CD14-positive monocyte (primary cell): ENCODE measurements at regions of chr1 and their contacts with region 1.

Region 1: GRCh38 chr1:17119076-17119772 is at the start of gene PADI2:
- DNase-seq: peak; percentile 65 to 71 (median 67)
- H3K4me3 ChIP-seq: peak within 1 kb of the TSS; percentile 60 to 75 (median 69)
- H3K4me3 Mint-ChIP-seq: peak within 1 kb of the TSS; percentile 83 to 97
- H3K27ac ChIP-seq: peak within 1 kb of the TSS; percentile 60 to 76
- H3K27ac Mint-ChIP-seq: peak within 1 kb of the TSS; percentile 63 to 94 (median 88)
- H3K4me1 ChIP-seq: peaks cover 91 to 92% of the 10 kb centered on the region in 2 donors
- H3K4me1 Mint-ChIP-seq: peaks cover 86% of the 10 kb centered on the region
- H3K27me3 ChIP-seq: no peaks in the 10 kb centered on the region
- H3K27me3 Mint-ChIP-seq: peaks cover 2 to 8% (median 8%) of the 10 kb centered on the region in 3 donors
- CTCF ChIP-seq: no peak
- polyA plus RNA-seq, gene PADI2: 18.6 to 61.7 (median 32.6) TPM

Region 2: GRCh38 chr1:17066361-17067068 is 52.7 kb before region 1 on chr1:
- intact Hi-C with region 1: loop called in 1 of 2 experiments (anchors 2 kb)
- DNase-seq: peak; percentile 72 to 81 (median 75)
- H3K4me3 ChIP-seq: peak overlapping the region in 1 of 3 experiments; percentile 6
- H3K4me3 Mint-ChIP-seq: peak overlapping the region in 1 of 2 donors; percentile 86
- H3K27ac ChIP-seq: peak overlapping the region; percentile 83 to 84
- H3K27ac Mint-ChIP-seq: peak overlapping the region; percentile 95 to 99 (median 96)
- H3K4me1 ChIP-seq: peaks cover 72 to 79% of the 10 kb centered on the region in 2 donors
- H3K4me1 Mint-ChIP-seq: peaks cover 67% of the 10 kb centered on the region
- H3K27me3 ChIP-seq: no peaks in the 10 kb centered on the region
- H3K27me3 Mint-ChIP-seq: peaks cover 0 to 1% (median 0%) of the 10 kb centered on the region in 3 donors
- CTCF ChIP-seq: no peak

Region 3: GRCh38 chr1:17075470-17076255 is 43.6 kb before region 1 on chr1:
- intact Hi-C with region 1: loop called in 1 of 2 experiments (anchors 5 kb)
- DNase-seq: peak; percentile 51 to 64 (median 57)
- H3K4me3 ChIP-seq: no peak overlapping the region
- H3K4me3 Mint-ChIP-seq: no peak overlapping the region
- H3K27ac ChIP-seq: peak overlapping the region in 1 of 2 donors; percentile 12
- H3K27ac Mint-ChIP-seq: peak overlapping the region in 4 of 7 donors; percentile 50 to 74 (median 62)
- H3K4me1 ChIP-seq: peaks cover 9 to 16% of the 10 kb centered on the region in 2 donors
- H3K4me1 Mint-ChIP-seq: peaks cover 31% of the 10 kb centered on the region
- H3K27me3 ChIP-seq: no peaks in the 10 kb centered on the region
- H3K27me3 Mint-ChIP-seq: peaks cover 0 to 1% (median 1%) of the 10 kb centered on the region in 3 donors
- CTCF ChIP-seq: peak; percentile 80

Region 4: GRCh38 chr1:17405898-17406759 is 286.9 kb after region 1 on chr1:
- intact Hi-C with region 1: loop called (anchors 10 kb)
- DNase-seq: peak; percentile 50 to 67 (median 51)
- H3K4me3 ChIP-seq: no peak overlapping the region
- H3K4me3 Mint-ChIP-seq: no peak overlapping the region
- H3K27ac ChIP-seq: no peak overlapping the region
- H3K27ac Mint-ChIP-seq: no peak overlapping the region
- H3K4me1 ChIP-seq: peaks cover 0 to 5% of the 10 kb centered on the region in 2 donors
- H3K4me1 Mint-ChIP-seq: peaks cover 7% of the 10 kb centered on the region
- H3K27me3 ChIP-seq: no peaks in the 10 kb centered on the region
- H3K27me3 Mint-ChIP-seq: peaks cover 0 to 2% (median 0%) of the 10 kb centered on the region in 3 donors
- CTCF ChIP-seq: peak; percentile 86

Region 5: DNA sequence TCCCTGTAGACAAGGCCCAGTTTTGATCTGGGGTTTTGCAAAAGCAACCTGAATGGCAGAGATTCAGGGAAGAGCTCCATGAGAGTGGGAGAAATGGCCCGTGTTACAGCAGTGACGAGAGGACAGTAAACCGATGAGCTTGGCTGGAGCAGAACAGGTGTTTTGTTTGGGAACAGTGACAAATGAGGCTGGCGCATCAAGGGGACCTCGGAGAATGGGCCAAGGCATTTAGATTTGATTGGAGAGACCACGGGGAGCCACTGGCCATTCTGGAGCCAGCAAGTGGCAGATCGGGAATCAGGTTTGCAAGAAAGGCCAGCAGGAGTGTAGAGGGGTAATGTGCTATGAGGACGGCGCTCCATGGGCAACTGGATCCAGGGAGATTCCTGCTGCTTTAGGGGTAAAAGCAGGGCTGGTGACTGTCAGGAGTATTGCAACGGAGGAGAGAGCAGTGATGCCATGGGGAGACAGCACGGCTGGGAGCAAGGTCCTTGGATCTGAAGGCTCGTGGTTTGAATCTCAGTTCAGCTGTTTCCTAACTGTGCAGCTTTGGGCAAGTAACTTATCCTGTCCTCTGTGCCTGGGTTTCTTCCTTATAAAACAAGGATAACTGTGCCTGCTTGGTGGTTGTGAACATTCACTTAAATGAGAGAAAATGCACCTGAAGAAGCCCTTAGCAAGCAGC is 1351.6 kb after region 1 on chr1:
- intact Hi-C with region 1: no loop called
- DNase-seq: no peak
- H3K4me3 ChIP-seq: no peak overlapping the region
- H3K4me3 Mint-ChIP-seq: no peak overlapping the region
- H3K27ac ChIP-seq: no peak overlapping the region
- H3K27ac Mint-ChIP-seq: peak overlapping the region in 1 of 7 donors; percentile 19
- H3K4me1 ChIP-seq: no peaks in the 10 kb centered on the region
- H3K4me1 Mint-ChIP-seq: no peaks in the 10 kb centered on the region
- H3K27me3 ChIP-seq: no peaks in the 10 kb centered on the region
- H3K27me3 Mint-ChIP-seq: peaks cover 2 to 6% (median 4%) of the 10 kb centered on the region in 3 donors
- CTCF ChIP-seq: no peak